ENCODE measurements at regions of chr2 and their contacts with region 1.

Region 1: GRCh38 chr2:22355816-22356433 is 1029.1 kb upstream of the KLHL29 start:
- DNase-seq: peak; percentile 12
- H3K4me3 Mint-ChIP-seq: no peak overlapping the region
- H3K27ac Mint-ChIP-seq: no peak overlapping the region
- H3K4me1 Mint-ChIP-seq: no peaks in the 10 kb centered on the region
- H3K27me3 Mint-ChIP-seq: peaks cover 11% of the 10 kb centered on the region
- CTCF ChIP-seq: peak; percentile 83

Region 2: GRCh38 chr2:22329211-22330154 is 26.4 kb before region 1 on chr2:
- CTCF ChIA-PET with region 1: interaction called, 10 read pairs
- POLR2A ChIA-PET with region 1: no interaction called
- intact Hi-C with region 1: no loop called
- DNase-seq: no peak
- H3K4me3 Mint-ChIP-seq: no peak overlapping the region
- H3K27ac Mint-ChIP-seq: no peak overlapping the region
- H3K4me1 Mint-ChIP-seq: no peaks in the 10 kb centered on the region
- H3K27me3 Mint-ChIP-seq: no peaks in the 10 kb centered on the region
- CTCF ChIP-seq: no peak

Region 3: GRCh38 chr2:22336414-22336813 is 19.5 kb before region 1 on chr2:
- CTCF ChIA-PET with region 1: interaction called, 12 read pairs
- POLR2A ChIA-PET with region 1: no interaction called
- intact Hi-C with region 1: no loop called
- DNase-seq: no peak
- H3K4me3 Mint-ChIP-seq: no peak overlapping the region
- H3K27ac Mint-ChIP-seq: no peak overlapping the region
- H3K4me1 Mint-ChIP-seq: no peaks in the 10 kb centered on the region
- H3K27me3 Mint-ChIP-seq: no peaks in the 10 kb centered on the region
- CTCF ChIP-seq: no peak

Region 4: GRCh38 chr2:22375096-22375495 is 19.2 kb after region 1 on chr2:
- CTCF ChIA-PET with region 1: interaction called, 14 read pairs
- POLR2A ChIA-PET with region 1: interaction called, 3 read pairs
- intact Hi-C with region 1: no loop called
- DNase-seq: peak; percentile 2
- H3K4me3 Mint-ChIP-seq: no peak overlapping the region
- H3K27ac Mint-ChIP-seq: no peak overlapping the region
- H3K4me1 Mint-ChIP-seq: no peaks in the 10 kb centered on the region
- H3K27me3 Mint-ChIP-seq: no peaks in the 10 kb centered on the region
- CTCF ChIP-seq: no peak

Region 5: DNA sequence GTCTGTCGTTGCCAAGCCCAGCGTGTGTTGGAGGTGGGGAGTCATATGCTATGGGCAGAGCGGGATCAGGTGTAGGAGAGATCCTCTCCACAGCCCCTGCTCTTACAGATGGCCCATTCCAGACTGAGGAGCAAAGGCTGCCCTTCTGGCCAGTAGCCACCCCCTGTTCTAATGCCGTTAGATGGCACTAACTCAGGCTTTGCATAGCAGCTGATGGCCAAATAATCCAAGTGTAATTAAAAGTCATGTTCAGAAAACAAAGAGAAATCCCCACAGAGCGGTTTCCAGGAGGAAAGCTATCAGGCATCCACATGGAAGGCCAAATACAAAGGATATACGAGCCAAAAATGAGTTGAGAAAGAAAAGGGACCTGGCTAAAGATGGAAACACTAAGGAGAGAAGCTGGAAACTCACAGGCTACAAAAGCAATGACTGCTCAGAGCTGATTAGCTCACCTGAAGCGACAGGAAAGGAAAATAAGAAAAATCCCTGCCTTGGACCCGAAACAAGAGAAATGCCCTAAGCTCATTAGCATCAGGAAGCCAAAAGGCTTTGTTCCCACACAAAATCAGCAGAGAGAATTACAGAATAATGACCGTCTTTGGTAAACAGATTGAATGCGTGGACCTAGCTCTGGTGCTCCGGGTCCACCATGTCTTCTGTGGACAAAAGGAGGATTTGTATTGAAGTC is 26.7 kb after region 1 on chr2:
- CTCF ChIA-PET with region 1: interaction called, 11 read pairs
- POLR2A ChIA-PET with region 1: no interaction called
- intact Hi-C with region 1: no loop called
- DNase-seq: no peak
- H3K4me3 Mint-ChIP-seq: no peak overlapping the region
- H3K27ac Mint-ChIP-seq: no peak overlapping the region
- H3K4me1 Mint-ChIP-seq: no peaks in the 10 kb centered on the region
- H3K27me3 Mint-ChIP-seq: peaks cover 7% of the 10 kb centered on the region
- CTCF ChIP-seq: no peak

Region 6: DNA sequence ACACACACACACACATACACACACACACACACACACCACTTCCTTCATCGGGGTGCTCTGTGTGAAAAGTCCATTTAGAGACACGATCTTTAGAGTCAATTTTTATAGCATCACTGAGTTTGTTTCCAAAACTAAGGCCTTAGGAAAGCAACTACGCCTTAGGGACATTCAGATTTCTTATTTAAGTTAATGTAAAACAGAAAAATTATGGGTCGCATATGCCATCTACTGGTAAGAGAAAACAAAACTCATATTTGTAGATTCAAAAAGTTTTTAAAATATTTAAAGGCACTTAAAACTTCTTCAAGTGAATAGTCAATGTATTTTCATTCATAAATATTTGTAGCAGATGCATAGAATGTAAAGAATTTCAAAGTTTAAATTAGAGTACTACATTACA is 1404.8 kb after region 1 on chr2:
- CTCF ChIA-PET with region 1: interaction called, 5 read pairs
- POLR2A ChIA-PET with region 1: no interaction called
- intact Hi-C with region 1: loop called (anchors 5 kb)
- DNase-seq: peak; percentile 41
- H3K4me3 Mint-ChIP-seq: no peak overlapping the region
- H3K27ac Mint-ChIP-seq: peak overlapping the region; percentile 82
- H3K4me1 Mint-ChIP-seq: peaks cover 25% of the 10 kb centered on the region
- H3K27me3 Mint-ChIP-seq: no peaks in the 10 kb centered on the region
- CTCF ChIP-seq: no peak

Measured in MCF 10A (cell line).